Astrocyte of the spinal cord (primary cell): ENCODE measurements at regions of chr16 and their contacts with region 1.

Region 1: DNA sequence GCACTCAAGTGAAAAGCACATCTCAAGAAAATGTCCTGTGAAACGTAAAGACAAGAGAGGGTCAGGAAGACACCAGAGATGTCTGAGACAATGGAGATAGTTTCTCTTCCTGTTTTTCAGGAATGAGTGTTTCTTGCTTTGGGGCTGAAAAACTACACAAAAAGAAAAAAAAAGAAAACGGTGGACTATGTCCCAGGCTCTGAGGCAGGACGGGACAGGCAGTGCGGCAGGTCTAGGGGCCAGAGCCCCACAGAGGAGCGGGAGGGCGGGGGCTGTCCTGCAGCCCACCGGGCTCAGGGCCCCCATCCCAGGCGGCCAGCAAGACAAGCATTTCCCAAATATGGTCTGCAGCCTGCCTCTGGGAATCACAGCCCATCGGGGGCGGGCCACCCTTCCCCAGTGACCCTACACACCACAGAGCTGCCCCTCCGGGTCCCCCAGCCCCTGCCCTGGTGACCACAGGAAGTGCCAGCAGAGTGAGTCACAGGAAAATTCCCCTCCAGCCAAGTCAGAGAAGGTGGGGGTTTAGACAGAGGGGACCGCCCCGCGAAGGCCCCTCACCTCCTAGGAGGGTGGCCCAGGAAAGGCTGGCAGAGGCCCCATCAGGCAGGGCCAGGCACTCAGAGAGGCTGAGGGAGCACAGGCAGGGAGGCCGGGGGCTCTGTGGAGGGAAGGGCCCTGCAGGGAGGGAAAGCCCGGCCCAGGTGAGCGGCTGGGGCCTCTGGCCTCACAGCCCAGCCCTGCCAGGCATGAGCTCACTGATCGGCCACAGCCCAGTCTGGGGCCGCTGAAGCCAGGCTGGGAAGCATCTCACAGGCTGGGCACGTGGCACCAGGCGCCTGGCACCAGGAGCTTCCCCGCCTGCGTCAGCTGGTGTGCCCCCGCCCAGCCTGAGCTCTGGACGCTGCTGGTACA is 6.3 kb downstream of the BCAR1 start:
- DNase-seq: peak; percentile 99
- H3K4me3 ChIP-seq: no peak overlapping the region
- CTCF ChIP-seq: no peak

Region 2: GRCh38 chr16:75296606-75297005 is 51.5 kb after region 1 on chr16:
- in situ Hi-C with region 1: no loop called
- DNase-seq: peak; percentile 52
- H3K4me3 ChIP-seq: no peak overlapping the region
- CTCF ChIP-seq: no peak

Region 3: DNA sequence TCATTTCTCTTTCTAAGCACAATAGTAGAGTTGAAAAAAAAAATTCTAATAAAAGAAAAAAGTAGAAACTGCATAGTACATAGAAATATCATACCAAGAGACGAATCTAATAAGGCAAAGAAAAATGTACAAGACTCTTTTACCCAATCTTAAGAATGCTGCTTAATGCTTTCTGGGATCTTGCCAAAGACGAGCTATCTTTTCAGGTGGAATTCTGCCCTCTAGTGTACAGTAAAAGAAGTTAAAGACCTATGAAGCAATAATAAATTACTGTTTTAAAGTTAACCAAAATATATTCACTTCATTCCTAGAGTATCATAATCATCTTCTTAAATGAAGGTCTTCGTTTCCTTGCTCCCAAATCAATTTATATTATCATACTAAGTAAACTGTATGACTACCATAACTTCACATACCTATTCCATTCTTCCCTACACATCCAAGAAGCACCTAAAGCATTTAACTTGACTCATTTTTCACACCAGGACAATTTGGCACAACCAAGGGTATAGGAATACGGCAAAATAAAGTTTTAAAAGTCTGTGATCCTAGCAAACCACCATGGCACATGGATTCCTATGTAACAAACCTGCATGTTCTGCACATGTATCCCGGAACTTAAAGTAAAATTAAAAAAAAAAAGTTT is 140.5 kb after region 1 on chr16:
- in situ Hi-C with region 1: loop called (anchors 25 kb)
- DNase-seq: peak; percentile 86
- H3K4me3 ChIP-seq: no peak overlapping the region
- CTCF ChIP-seq: peak; percentile 42